CD4-positive, alpha-beta T cell (primary cell): ENCODE measurements at regions of chr1 and their contacts with region 1.

Region 1: GRCh38 chr1:160607011-160607671 is 27.8 kb upstream of the CD84 start:
- DNase-seq: peak in 12 of 14 experiments; percentile 26 to 90 (median 53)
- ATAC-seq: peak; percentile 98
- H3K4me3 ChIP-seq: no peak overlapping the region
- H3K4me3 Mint-ChIP-seq: peak overlapping the region; percentile 28
- H3K27ac ChIP-seq: no peak overlapping the region
- H3K27ac Mint-ChIP-seq: peak overlapping the region; percentile 67
- H3K4me1 ChIP-seq: peaks cover 29% of the 10 kb centered on the region
- H3K4me1 Mint-ChIP-seq: peaks cover 45% of the 10 kb centered on the region
- H3K27me3 ChIP-seq: no peaks in the 10 kb centered on the region
- H3K27me3 Mint-ChIP-seq: no peaks in the 10 kb centered on the region
- CTCF ChIP-seq: peak; percentile 87

Region 2: DNA sequence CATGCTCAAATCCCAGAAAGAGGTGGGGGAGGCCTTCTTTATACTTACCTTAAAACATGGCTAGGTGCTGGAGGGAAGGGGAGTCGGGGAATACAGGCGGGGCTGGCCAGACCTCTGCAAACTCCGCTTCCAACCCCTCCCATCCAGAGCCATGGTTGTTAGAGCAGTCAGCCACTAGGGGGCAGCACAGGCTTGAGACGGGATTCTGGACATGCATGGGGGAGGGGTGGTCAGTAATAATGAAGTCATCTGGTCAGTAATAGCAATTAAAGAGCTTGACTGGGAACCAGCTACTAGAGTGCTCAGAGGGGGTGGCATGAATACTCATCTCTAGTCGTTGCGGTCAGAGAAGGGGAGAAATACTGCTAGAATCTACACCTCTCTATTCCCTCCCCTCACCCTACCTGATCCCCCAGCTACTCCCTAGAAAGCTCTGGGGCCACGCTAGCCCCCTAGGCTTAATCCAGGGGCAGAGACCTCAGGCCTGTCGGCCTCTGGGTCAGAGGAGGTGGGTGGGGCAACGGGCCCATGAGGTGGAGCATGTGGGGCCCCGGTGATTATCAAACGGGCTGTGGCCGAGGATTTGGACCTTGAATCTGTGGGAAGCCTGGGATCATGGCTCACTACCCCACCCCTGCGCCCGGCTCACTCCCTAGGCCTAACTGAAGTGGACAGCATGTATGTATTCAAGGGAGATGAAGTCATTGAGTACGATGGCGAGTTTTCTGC is 413.9 kb before region 1 on chr1:
- CTCF ChIA-PET with region 1: no interaction called
- POLR2A ChIA-PET with region 1: no interaction called
- intact Hi-C with region 1: loop called (anchors 5 to 10 kb)
- DNase-seq: peak; percentile 62 to 88 (median 78)
- ATAC-seq: peak; percentile 95
- H3K4me3 ChIP-seq: no peak overlapping the region
- H3K4me3 Mint-ChIP-seq: no peak overlapping the region
- H3K27ac ChIP-seq: no peak overlapping the region
- H3K27ac Mint-ChIP-seq: no peak overlapping the region
- H3K4me1 ChIP-seq: peaks cover 7% of the 10 kb centered on the region
- H3K4me1 Mint-ChIP-seq: no peaks in the 10 kb centered on the region
- H3K27me3 ChIP-seq: no peaks in the 10 kb centered on the region
- H3K27me3 Mint-ChIP-seq: no peaks in the 10 kb centered on the region
- CTCF ChIP-seq: peak; percentile 89

Region 3: GRCh38 chr1:160354388-160354985 is 252.7 kb before region 1 on chr1:
- CTCF ChIA-PET with region 1: no interaction called
- POLR2A ChIA-PET with region 1: no interaction called
- intact Hi-C with region 1: loop called in 1 of 2 experiments (anchors 1 kb)
- DNase-seq: peak in 3 of 14 experiments; percentile 21 to 48 (median 42)
- ATAC-seq: peak; percentile 58
- H3K4me3 ChIP-seq: no peak overlapping the region
- H3K4me3 Mint-ChIP-seq: no peak overlapping the region
- H3K27ac ChIP-seq: no peak overlapping the region
- H3K27ac Mint-ChIP-seq: no peak overlapping the region
- H3K4me1 ChIP-seq: no peaks in the 10 kb centered on the region
- H3K4me1 Mint-ChIP-seq: peaks cover 3% of the 10 kb centered on the region
- H3K27me3 ChIP-seq: no peaks in the 10 kb centered on the region
- H3K27me3 Mint-ChIP-seq: no peaks in the 10 kb centered on the region
- CTCF ChIP-seq: peak; percentile 27

Region 4: GRCh38 chr1:160494620-160495019 is 112.5 kb before region 1 on chr1:
- CTCF ChIA-PET with region 1: no interaction called
- POLR2A ChIA-PET with region 1: no interaction called
- intact Hi-C with region 1: loop called in 1 of 2 experiments (anchors 5 kb)
- DNase-seq: peak in 3 of 14 experiments; percentile 18 to 43 (median 30)
- ATAC-seq: no peak
- H3K4me3 ChIP-seq: no peak overlapping the region
- H3K4me3 Mint-ChIP-seq: no peak overlapping the region
- H3K27ac ChIP-seq: no peak overlapping the region
- H3K27ac Mint-ChIP-seq: no peak overlapping the region
- H3K4me1 ChIP-seq: no peaks in the 10 kb centered on the region
- H3K4me1 Mint-ChIP-seq: peaks cover 15% of the 10 kb centered on the region
- H3K27me3 ChIP-seq: no peaks in the 10 kb centered on the region
- H3K27me3 Mint-ChIP-seq: no peaks in the 10 kb centered on the region
- CTCF ChIP-seq: peak; percentile 11

Region 5: GRCh38 chr1:160575112-160575664 is 32.0 kb before region 1 on chr1:
- CTCF ChIA-PET with region 1: interaction called, 4 read pairs
- POLR2A ChIA-PET with region 1: interaction called, 21 read pairs
- intact Hi-C with region 1: no loop called
- DNase-seq: peak in 2 of 14 experiments; percentile 53 to 57
- ATAC-seq: peak; percentile 21
- H3K4me3 ChIP-seq: peak overlapping the region; percentile 56
- H3K4me3 Mint-ChIP-seq: peak overlapping the region; percentile 94
- H3K27ac ChIP-seq: peak overlapping the region; percentile 29 to 60
- H3K27ac Mint-ChIP-seq: peak overlapping the region; percentile 87
- H3K4me1 ChIP-seq: peaks cover 66% of the 10 kb centered on the region
- H3K4me1 Mint-ChIP-seq: peaks cover 96% of the 10 kb centered on the region
- H3K27me3 ChIP-seq: no peaks in the 10 kb centered on the region
- H3K27me3 Mint-ChIP-seq: no peaks in the 10 kb centered on the region
- CTCF ChIP-seq: no peak